ENCODE measurements at regions of chr4 and their contacts with region 1.

Region 1: DNA sequence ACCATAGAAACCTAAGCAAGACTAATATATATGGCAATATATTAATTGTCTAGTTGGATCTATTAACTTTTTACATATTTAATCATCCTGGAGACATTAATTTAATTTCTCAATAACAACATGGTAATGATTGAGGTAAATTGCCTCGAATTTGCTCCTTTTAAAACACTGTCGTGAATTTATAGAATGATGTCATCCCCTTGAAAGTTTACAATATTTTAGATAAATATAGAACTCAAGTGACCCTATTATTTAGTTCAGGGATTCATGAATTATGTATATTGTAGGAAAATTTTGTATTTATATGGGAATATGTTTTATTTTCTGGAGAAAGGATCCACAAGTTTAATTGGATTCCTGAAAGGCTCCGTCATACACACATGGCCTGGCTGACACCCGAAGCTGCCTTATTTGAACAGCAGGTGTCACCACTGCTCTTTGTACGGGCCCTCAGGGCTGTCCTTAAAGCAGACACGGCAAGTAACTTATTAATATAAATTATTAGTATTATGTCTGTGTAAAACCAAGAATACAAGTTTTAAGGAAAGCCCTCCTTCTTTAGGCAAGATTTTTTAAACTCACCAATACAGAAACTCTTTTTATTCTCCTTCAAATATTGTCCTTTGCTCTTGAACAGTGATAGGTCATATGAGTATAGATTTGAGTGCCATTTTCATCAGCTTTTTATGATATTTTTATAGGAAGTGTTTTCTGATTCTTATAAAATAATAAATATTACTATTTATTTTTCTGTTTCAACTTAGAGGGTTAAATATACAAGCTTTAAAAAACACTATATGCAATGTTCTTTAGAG is 1.9 kb upstream of the PLRG1 start:
- DNase-seq: peak; percentile 62 to 85 (median 70)
- ATAC-seq: peak; percentile 76
- H3K4me3 ChIP-seq: no peak overlapping the region
- H3K27ac ChIP-seq: 0 out of 3 replicates have a peak overlapping the region, but pooled peaks have one; percentile 18
- H3K4me1 ChIP-seq: peaks cover 0 to 7% of the 10 kb centered on the region in 2 experiments; a peak in 1 of 5 replicates
- H3K27me3 ChIP-seq: no peaks in the 10 kb centered on the region
- CTCF ChIP-seq: peak; percentile 80 to 87 (median 81)
- EP300 ChIP-seq: no peak
- POLR2A ChIP-seq: no peak
- RAD21 ChIP-seq: peak; percentile 77 to 83

Region 2: GRCh38 chr4:153773236-153773690 is 778.8 kb before region 1 on chr4:
- CTCF ChIA-PET with region 1: no interaction called
- POLR2A ChIA-PET with region 1: no interaction called
- in situ Hi-C with region 1: no loop called
- intact Hi-C with region 1: loop called (anchors 5 kb)
- DNase-seq: peak; percentile 71 to 90 (median 82)
- ATAC-seq: peak; percentile 99
- H3K4me3 ChIP-seq: no peak overlapping the region
- H3K27ac ChIP-seq: peak overlapping the region; percentile 72
- H3K4me1 ChIP-seq: peaks cover 0 to 15% of the 10 kb centered on the region in 2 experiments; a peak in 2 of 5 replicates
- H3K27me3 ChIP-seq: no peaks in the 10 kb centered on the region
- CTCF ChIP-seq: peak; percentile 28 to 54 (median 51); a peak in 4 of 6 replicates
- EP300 ChIP-seq: peak; percentile 88
- POLR2A ChIP-seq: no peak
- RAD21 ChIP-seq: peak; percentile 25 to 67

Region 3: GRCh38 chr4:154609532-154609931 is 57.5 kb after region 1 on chr4:
- CTCF ChIA-PET with region 1: no interaction called
- POLR2A ChIA-PET with region 1: no interaction called
- in situ Hi-C with region 1: no loop called
- intact Hi-C with region 1: no loop called
- DNase-seq: no peak
- ATAC-seq: no peak
- H3K4me3 ChIP-seq: no peak overlapping the region
- H3K27ac ChIP-seq: no peak overlapping the region
- H3K4me1 ChIP-seq: no peaks in the 10 kb centered on the region
- H3K27me3 ChIP-seq: no peaks in the 10 kb centered on the region
- CTCF ChIP-seq: no peak
- EP300 ChIP-seq: no peak
- POLR2A ChIP-seq: no peak
- RAD21 ChIP-seq: no peak

Region 4: DNA sequence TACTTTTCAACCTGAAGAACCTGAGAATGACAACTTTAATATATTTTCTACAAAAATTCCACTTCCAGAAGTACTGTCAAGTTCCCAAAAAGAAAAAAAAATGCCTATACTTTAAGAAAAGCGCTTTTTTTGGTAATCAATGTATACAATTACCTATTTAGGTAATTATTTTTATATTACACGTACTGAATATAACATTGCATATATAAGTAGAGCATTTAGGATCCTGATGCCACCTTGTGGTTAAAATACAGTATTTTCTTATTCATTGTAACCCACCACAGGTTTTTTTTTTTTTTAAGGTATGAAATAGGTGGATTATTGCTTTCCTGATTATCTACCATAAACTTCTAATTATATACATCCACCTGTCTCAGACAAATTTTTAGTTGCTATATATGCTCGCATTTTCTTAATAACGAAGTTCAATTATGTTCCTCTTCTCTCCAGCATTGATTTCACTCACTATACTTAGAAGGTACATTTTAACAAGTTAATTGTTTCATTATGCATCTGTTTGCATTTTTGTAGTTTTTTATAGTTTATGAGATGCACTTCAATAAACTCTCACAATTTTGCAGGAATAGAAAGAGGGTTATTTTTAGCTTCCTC is 819.5 kb after region 1 on chr4:
- CTCF ChIA-PET with region 1: interaction called, 7 read pairs
- POLR2A ChIA-PET with region 1: no interaction called
- in situ Hi-C with region 1: no loop called
- intact Hi-C with region 1: loop called (anchors 2 kb)
- DNase-seq: peak in 1 of 4 experiments; percentile 6
- ATAC-seq: peak; percentile 65
- H3K4me3 ChIP-seq: no peak overlapping the region
- H3K27ac ChIP-seq: no peak overlapping the region
- H3K4me1 ChIP-seq: peaks cover 0 to 3% of the 10 kb centered on the region in 2 experiments; a peak in 2 of 5 replicates
- H3K27me3 ChIP-seq: no peaks in the 10 kb centered on the region
- CTCF ChIP-seq: peak in 2 of 3 experiments; percentile 19 to 47; a peak in 3 of 6 replicates
- EP300 ChIP-seq: no peak
- POLR2A ChIP-seq: no peak
- RAD21 ChIP-seq: peak; percentile 34 to 38

Region 5: GRCh38 chr4:155953151-155954114 is 1401.4 kb after region 1 on chr4 and contains the start of gene CTSO:
- CTCF ChIA-PET with region 1: no interaction called
- POLR2A ChIA-PET with region 1: no interaction called
- in situ Hi-C with region 1: no loop called
- intact Hi-C with region 1: loop called (anchors 10 kb)
- DNase-seq: peak; percentile 9 to 40 (median 22)
- ATAC-seq: peak; percentile 98
- H3K4me3 ChIP-seq: peak within 1 kb of the TSS; percentile 51
- H3K27ac ChIP-seq: no peak within 1 kb of the TSS
- H3K4me1 ChIP-seq: peaks cover 0 to 7% of the 10 kb centered on the region in 2 experiments; a peak in 2 of 5 replicates
- H3K27me3 ChIP-seq: no peaks in the 10 kb centered on the region
- CTCF ChIP-seq: peak; percentile 35 to 53 (median 38); a peak in 4 of 6 replicates
- EP300 ChIP-seq: no peak
- POLR2A ChIP-seq: no peak
- RAD21 ChIP-seq: peak; percentile 32 to 38; a peak in 3 of 4 replicates
- polyA plus RNA-seq, gene CTSO: not detected